Head of caudate nucleus (tissue), 42 donors: ENCODE measurements at regions of chr1 and their contacts with region 1.

Region 1: DNA sequence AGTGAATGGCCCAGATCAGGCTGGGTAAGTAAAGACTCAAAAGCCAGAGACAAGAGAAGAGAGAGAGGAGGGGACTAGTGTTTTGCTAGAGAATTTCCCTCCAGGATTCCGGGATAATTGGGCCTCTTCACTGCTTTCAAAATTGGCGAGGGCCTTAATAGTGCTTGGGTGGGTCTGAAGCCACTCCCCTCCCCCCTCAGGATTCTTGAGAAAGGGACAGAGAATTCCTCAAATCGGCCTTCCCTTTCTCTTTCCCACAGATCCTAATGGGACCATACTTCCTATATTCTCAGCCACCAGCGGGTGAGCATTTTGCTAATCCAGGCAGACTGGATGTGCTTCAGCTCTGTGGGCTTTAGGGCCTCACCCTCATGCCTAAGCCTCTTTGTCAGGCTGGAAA is 11.9 kb downstream of the SFN start:
- DNase-seq: no peak

Region 2: DNA sequence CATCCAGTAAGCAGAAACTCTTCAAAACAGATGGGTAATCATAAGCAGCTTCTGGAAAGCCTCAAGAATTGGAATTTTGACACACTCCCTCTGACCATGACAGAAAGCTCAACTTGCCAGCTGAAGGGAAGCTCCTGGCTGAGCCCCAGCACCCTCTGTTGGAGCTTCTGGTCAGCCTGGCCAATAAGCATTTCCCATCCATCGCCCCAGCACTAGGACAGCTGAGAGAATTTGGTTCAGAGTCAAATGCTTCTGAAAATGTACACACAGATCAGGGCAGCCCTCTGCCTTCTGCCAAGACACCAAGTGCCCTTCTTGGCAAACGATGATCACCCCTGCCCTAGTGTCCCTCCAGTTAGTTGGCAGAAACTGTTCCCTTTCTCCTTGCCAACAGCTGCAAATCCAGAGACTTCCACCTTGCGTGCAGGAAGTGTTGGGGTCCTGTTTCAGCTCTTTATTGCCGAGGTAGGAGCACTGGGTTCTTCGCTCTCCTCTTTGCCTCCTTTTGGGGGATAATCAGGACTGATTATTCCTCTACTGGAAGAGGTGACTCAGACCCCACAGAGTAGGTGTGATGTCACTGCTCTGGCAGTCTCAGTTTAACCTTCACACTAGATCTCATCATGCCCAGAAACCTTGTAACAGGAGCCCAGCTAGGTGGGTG is 75.3 kb before region 1 on chr1:
- intact Hi-C with region 1: loop called (anchors 10 kb)
- DNase-seq: peak in 40 of 42 donors; percentile 20 to 84 (median 64)

Region 3: GRCh38 chr1:26811057-26811456 is 63.8 kb before region 1 on chr1:
- intact Hi-C with region 1: loop called (anchors 5 kb)
- DNase-seq: no peak